Left cardiac atrium (tissue), 4 donors: ENCODE measurements at regions of chr7 and their contacts with region 1.

Region 1: DNA sequence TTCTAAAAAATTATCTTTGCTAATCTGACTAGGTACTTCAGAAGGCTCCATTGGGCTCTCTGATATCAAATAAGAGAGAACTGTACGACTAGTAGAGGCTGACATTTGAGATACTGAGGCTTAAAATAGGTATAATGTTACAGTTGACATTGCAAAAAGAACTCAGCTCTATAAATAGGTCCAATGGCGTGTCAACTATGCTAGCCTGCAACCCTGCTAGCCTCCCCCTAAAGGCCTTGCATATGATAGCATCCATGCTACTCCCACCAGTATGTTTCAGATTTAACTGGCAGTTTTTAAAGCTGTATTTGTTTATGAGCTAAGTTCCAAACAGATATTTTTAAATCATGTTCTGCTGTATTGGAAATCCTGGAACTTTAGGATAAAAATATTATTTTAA is at the start of gene PPP1R3A:
- DNase-seq: peak; percentile 18
- ATAC-seq: peak; percentile 85 to 89
- total RNA-seq, gene PPP1R3A: 54.1 to 61.4 TPM

Region 2: DNA sequence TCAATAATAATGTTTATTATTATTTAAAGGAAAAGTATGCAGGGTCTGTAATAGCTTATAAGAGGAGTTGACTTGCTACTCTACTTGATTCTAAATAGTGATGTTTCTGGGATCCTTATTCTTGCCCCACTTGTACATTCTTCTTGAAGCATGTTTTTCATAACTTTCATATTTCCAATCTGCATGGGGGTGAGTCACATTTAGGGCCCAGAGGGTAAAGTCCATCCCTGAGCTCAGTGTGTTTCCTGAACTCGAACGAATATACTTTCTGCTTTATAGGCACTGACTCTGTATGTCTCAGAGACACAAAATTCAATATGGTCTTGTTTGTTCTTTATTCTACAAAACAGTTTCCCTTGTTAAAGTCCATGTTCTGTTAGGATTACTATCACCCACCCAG is 739.6 kb before region 1 on chr7:
- intact Hi-C with region 1: no loop called
- DNase-seq: no peak
- ATAC-seq: no peak

Region 3: GRCh38 chr7:113405296-113406056 is 513.5 kb before region 1 on chr7:
- intact Hi-C with region 1: no loop called
- DNase-seq: no peak
- ATAC-seq: no peak

Region 4: DNA sequence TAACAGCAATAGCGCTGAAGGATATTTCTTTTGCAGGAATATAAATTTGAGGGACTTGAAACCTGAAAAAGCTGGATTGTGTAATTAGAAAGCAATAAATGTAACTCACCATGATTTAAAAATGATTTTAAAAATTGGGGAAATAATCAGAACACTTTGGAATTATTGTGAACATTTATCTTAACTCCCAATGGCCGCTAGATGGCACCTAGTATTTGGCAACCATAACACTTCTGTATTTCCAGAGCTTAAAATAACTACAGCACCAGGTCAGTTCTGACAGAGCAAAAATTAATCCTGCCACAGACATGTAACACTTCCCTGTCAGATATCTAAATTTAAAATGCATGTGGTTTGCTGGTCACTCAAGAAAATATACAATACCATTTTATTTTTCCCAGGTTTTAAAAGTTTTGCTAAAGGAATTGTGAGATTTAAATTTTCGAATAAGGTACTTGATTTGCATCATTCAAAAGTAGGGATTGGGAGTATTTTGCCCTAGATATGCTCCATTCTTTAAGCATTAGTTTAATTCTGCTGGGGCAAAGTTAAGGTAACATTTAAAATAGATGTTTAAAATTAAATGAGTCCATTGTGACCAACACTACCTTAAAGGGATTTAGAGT is 144.7 kb before region 1 on chr7:
- intact Hi-C with region 1: loop called in 1 of 2 experiments (anchors 5 kb)
- DNase-seq: no peak
- ATAC-seq: peak; percentile 53 to 81

Region 5: DNA sequence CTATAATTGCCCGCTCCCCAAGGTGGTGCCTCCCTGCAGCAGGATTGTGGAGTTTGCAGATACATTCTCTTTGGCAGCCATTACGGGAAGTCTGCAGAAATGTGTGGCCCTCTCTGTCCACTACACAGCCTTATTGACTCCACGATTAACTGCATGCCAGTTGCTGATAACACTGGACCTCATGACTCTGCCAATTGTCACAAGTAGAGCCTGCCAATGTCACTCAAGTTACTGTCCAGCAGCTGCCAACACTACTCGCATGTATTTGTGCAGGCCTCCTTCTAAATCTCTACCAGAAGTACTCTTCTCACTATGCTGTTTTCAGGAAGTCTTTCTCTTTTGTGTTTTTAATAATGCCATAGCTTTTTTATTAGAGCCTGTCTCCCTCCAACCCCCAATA is 128.9 kb before region 1 on chr7:
- intact Hi-C with region 1: loop called in 1 of 2 experiments (anchors 5 kb)
- DNase-seq: peak; percentile 23
- ATAC-seq: peak; percentile 98